ENCODE measurements at regions of chr6 and their contacts with region 1.

Region 1: GRCh38 chr6:83578057-83578456 is 65.7 kb downstream of the PRSS35 start:
- DNase-seq: no peak
- H3K4me3 ChIP-seq: no peak overlapping the region
- H3K27ac ChIP-seq: no peak overlapping the region
- H3K4me1 ChIP-seq: no peaks in the 10 kb centered on the region
- H3K27me3 ChIP-seq: no peaks in the 10 kb centered on the region
- CTCF ChIP-seq: no peak
- EP300 ChIP-seq: no peak
- POLR2A ChIP-seq: no peak
- RAD21 ChIP-seq: no peak

Region 2: GRCh38 chr6:83546636-83547035 is 31.4 kb before region 1 on chr6:
- CTCF ChIA-PET with region 1: no interaction called
- POLR2A ChIA-PET with region 1: no interaction called
- DNase-seq: no peak
- H3K4me3 ChIP-seq: no peak overlapping the region
- H3K27ac ChIP-seq: no peak overlapping the region
- H3K4me1 ChIP-seq: no peaks in the 10 kb centered on the region
- H3K27me3 ChIP-seq: no peaks in the 10 kb centered on the region
- CTCF ChIP-seq: no peak
- EP300 ChIP-seq: no peak
- POLR2A ChIP-seq: no peak
- RAD21 ChIP-seq: no peak

Region 3: GRCh38 chr6:83592770-83593394 is 14.8 kb after region 1 on chr6:
- CTCF ChIA-PET with region 1: interaction called, 12 read pairs
- POLR2A ChIA-PET with region 1: no interaction called
- DNase-seq: peak in 1 of 2 experiments; percentile 5
- H3K4me3 ChIP-seq: no peak overlapping the region
- H3K27ac ChIP-seq: no peak overlapping the region
- H3K4me1 ChIP-seq: peaks cover 0 to 5% (median 2%) of the 10 kb centered on the region in 4 experiments; a peak in 1 of 7 replicates
- H3K27me3 ChIP-seq: no peaks in the 10 kb centered on the region
- CTCF ChIP-seq: peak; percentile 34 to 77 (median 70)
- EP300 ChIP-seq: no peak
- POLR2A ChIP-seq: no peak
- RAD21 ChIP-seq: peak; percentile 64 to 70